ENCODE measurements at regions of chr17 and their contacts with region 1.

Region 1: DNA sequence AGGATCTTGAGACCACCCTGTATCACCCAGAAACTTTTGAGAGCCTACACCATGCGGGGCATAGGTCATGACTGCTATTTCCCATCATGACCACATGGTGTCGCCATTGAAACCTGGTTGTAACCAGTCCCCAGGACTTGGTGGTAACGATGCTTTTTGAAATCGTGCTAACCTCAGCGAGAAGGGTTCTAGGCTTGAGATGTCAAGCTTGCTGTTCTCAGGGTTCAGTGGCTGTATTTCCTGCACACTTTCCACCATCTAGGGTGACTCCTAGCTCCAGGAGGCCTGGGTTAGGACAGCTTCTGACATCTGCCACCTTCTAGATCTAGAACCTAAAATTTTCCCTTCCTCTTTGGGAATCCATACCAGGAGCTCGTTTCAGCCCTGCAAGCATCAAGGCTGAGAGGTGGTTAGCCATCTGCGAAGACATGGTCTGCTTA is 13.0 kb upstream of the SPNS3 start:
- DNase-seq: peak in 3 of 5 donors; percentile 43 to 62 (median 54)
- ATAC-seq: peak in 3 of 4 donors; percentile 88 to 92 (median 90)
- H3K4me3 ChIP-seq: no peak overlapping the region
- H3K27ac ChIP-seq: no peak overlapping the region
- H3K4me1 ChIP-seq: peaks cover 0 to 4% (median 0%) of the 10 kb centered on the region in 12 donors
- H3K27me3 ChIP-seq: no peaks in the 10 kb centered on the region
- CTCF ChIP-seq: peak; percentile 77 to 92 (median 83)
- POLR2A ChIP-seq: no peak

Region 2: DNA sequence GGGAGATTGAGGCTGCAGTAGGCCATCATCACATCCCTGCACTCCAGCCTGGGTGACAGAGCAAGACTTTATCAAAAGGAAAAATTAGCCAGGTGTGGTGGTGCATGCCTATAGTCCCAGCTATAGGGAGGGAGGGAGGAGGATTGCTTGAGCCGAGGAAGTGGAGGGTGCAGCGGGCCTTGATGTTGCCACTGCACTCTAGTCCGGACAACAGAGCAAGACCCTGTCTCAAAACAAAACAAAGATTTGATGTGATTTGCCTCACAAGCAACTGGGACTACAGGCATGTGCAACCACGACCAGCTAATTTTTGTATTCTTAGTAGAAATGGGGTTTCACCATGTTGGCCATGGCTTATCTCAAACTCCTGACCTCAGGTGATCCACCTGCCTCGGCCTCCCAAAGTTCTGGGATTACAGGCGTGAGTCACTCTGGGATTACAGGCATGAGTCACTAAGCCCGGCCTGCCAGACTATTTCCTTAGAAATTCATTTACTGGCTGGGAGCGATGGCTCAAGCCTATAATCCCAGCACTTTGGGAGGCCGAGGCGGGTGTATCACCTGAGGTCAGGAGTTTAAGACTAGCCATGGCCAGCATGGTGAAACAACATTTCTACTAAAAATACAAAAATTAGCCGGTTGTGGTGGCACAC is 65.7 kb before region 1 on chr17:
- intact Hi-C with region 1: no loop called
- DNase-seq: no peak
- ATAC-seq: no peak
- H3K4me3 ChIP-seq: no peak overlapping the region
- H3K27ac ChIP-seq: no peak overlapping the region
- H3K4me1 ChIP-seq: peaks cover 0 to 64% (median 41%) of the 10 kb centered on the region in 12 donors
- H3K27me3 ChIP-seq: no peaks in the 10 kb centered on the region
- CTCF ChIP-seq: no peak
- POLR2A ChIP-seq: no peak

Region 3: DNA sequence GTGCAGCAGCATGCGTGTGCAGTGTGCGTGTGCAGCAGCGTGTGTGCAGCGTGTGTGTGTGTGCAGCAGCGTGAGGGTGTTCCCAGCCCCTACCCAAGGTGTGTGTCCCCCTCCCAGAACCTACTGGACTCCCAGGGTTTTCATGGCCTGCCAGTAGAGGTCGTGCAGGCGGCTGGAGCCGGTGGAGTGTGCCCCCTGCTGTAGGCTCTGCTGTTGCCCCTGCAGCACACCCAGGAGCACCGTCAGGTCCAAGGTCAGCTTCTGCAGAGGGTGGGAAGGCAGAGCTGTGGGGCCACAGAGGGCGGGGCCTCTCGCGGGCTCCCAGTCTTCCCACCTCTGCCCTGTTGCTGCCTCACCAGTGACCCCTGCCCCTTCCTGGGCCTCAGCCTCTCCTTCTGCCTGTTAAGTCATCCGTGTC is 119.5 kb after region 1 on chr17:
- intact Hi-C with region 1: loop called in 8 of 10 experiments (anchors 2 to 10 kb)
- DNase-seq: peak in 1 of 5 donors; percentile 23
- ATAC-seq: peak in 2 of 4 donors; percentile 1 to 6
- H3K4me3 ChIP-seq: no peak overlapping the region
- H3K27ac ChIP-seq: peak overlapping the region; percentile 24 to 80 (median 53)
- H3K4me1 ChIP-seq: peaks cover 18 to 68% (median 45%) of the 10 kb centered on the region in 12 donors
- H3K27me3 ChIP-seq: no peaks in the 10 kb centered on the region
- CTCF ChIP-seq: peak in 5 of 12 donors; percentile 9 to 31 (median 21)
- POLR2A ChIP-seq: no peak

Region 4: DNA sequence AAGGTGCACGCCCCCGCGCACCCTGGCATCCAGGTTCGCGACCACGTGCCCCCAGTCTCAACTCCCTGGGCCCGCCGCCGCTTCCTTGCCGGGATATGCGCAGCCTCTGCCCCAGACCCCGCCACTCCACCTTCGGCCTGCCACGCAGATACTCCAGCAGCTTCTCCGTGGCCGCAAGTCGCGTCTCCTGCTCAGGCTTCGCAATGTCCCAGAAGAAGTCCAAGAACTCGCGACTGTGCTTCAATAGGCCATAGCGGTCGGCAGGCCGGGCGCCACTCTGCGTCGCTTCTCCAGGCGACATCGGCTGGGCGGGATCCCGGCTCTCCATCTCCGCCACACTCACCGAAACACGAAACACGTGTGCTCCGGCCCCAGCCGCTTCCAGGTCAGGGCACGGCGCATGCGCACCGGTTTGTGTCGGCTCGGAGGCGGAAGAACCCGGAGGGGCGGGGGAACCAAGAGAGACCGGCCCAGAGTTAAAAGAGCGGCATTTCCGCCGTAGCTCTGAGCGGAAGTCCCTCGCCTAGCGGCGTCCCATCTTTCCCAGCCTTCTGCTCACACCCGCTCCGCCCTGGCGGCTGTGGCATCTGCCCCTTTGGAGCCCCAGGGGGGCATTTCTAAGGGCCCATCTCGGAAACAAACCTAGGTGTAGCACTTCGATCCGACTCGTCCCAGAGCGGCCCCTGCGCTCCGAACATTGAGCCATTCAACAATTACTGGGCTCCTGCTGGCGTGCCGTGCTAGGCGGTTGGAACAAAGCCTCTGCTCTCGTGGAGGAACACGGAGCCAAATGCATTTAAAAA is 134.5 kb after region 1 on chr17 and contains the start of gene MYBBP1A:
- intact Hi-C with region 1: loop called in 3 of 10 experiments (anchors 5 kb)
- DNase-seq: peak; percentile 97 to 99 (median 98)
- ATAC-seq: peak; percentile 92 to 97 (median 94)
- H3K4me3 ChIP-seq: peak within 1 kb of the TSS; percentile 43 to 94 (median 80)
- H3K27ac ChIP-seq: peak within 1 kb of the TSS; percentile 67 to 93 (median 87)
- H3K4me1 ChIP-seq: peaks cover 3 to 23% (median 17%) of the 10 kb centered on the region in 12 donors
- H3K27me3 ChIP-seq: no peaks in the 10 kb centered on the region
- CTCF ChIP-seq: peak in 9 of 12 donors; percentile 18 to 51 (median 40)
- POLR2A ChIP-seq: peak in 1 of 2 donors; percentile 73
- total RNA-seq, gene MYBBP1A: 17.4 to 34.8 (median 24.4) TPM

Region 5: GRCh38 chr17:4625181-4625617 is 204.5 kb after region 1 on chr17:
- intact Hi-C with region 1: loop called (anchors 2 to 10 kb)
- DNase-seq: no peak
- ATAC-seq: peak; percentile 48 to 69 (median 60)
- H3K4me3 ChIP-seq: no peak overlapping the region
- H3K27ac ChIP-seq: peak overlapping the region in 3 of 12 donors; percentile 3 to 46 (median 37)
- H3K4me1 ChIP-seq: peaks cover 0 to 13% (median 8%) of the 10 kb centered on the region in 12 donors
- H3K27me3 ChIP-seq: peaks cover 0 to 2% (median 0%) of the 10 kb centered on the region in 9 donors
- CTCF ChIP-seq: no peak
- POLR2A ChIP-seq: no peak